Caco-2 (cell line): ENCODE measurements at regions of chr17 and their contacts with region 1.

Region 1: DNA sequence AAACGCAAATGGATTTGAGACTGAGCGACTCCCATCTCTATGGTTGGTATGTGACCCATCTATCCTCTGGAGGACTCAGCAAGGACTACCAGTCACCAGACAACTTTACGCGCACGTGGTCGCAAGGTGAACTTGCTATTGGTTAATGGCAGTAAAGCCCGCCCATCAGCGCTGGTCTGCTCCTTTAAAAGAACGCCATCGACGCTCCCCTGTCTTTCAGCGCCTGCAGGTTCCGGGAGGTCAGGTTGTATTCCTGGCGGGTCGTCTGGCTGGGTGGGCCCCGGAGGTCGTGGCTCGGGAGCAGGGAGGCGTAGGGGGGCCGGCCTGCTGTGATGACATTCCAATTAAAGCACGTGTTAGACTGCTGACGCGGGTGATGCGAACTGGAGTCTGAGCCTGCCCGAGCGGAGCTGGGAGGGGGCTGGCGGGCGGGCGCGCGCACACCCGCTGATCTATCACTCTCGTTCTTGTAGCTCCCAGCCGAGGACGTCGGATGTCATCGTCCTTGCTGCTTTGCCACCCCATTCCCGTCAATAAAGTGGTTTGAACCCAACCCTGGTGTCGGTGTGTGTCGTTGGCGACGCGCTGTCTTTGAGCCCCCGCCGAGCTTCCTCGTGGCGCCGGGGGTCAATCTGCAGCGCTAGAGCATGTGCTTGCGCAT is 15.9 kb upstream of the ERN1 start:
- DNase-seq: peak; percentile 97 to 99
- H3K4me3 ChIP-seq: peak overlapping the region; percentile 81
- H3K4me3 Mint-ChIP-seq: no peak overlapping the region
- H3K27ac Mint-ChIP-seq: no peak overlapping the region
- H3K4me1 ChIP-seq: no peaks in the 10 kb centered on the region
- H3K4me1 Mint-ChIP-seq: peaks cover 20% of the 10 kb centered on the region
- H3K27me3 ChIP-seq: no peaks in the 10 kb centered on the region
- H3K27me3 Mint-ChIP-seq: no peaks in the 10 kb centered on the region
- CTCF ChIP-seq: no peak

Region 2: DNA sequence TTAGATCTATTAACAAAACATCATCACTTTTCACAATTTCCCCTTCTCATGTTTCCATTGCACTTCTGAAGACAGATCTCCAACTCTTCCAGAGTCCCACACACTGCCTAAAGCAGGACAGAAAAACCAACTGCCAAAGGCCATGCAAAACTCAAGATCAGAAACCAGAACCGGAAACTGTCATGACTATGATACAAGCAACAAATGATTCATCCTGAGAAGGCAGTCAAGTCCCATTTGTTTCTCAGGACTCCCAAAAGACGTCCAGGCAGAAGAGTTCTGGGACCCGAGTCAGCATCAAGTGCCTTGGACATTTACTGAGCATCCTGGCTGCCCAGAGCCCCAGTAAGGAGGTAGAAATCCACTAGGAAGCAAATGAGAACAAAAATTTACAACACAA is 54.8 kb before region 1 on chr17:
- CTCF ChIA-PET with region 1: no interaction called
- POLR2A ChIA-PET with region 1: no interaction called
- intact Hi-C with region 1: no loop called
- DNase-seq: no peak
- H3K4me3 ChIP-seq: no peak overlapping the region
- H3K4me3 Mint-ChIP-seq: no peak overlapping the region
- H3K27ac Mint-ChIP-seq: no peak overlapping the region
- H3K4me1 ChIP-seq: peaks cover 17% of the 10 kb centered on the region
- H3K4me1 Mint-ChIP-seq: peaks cover 20% of the 10 kb centered on the region
- H3K27me3 ChIP-seq: no peaks in the 10 kb centered on the region
- H3K27me3 Mint-ChIP-seq: no peaks in the 10 kb centered on the region
- CTCF ChIP-seq: no peak

Region 3: DNA sequence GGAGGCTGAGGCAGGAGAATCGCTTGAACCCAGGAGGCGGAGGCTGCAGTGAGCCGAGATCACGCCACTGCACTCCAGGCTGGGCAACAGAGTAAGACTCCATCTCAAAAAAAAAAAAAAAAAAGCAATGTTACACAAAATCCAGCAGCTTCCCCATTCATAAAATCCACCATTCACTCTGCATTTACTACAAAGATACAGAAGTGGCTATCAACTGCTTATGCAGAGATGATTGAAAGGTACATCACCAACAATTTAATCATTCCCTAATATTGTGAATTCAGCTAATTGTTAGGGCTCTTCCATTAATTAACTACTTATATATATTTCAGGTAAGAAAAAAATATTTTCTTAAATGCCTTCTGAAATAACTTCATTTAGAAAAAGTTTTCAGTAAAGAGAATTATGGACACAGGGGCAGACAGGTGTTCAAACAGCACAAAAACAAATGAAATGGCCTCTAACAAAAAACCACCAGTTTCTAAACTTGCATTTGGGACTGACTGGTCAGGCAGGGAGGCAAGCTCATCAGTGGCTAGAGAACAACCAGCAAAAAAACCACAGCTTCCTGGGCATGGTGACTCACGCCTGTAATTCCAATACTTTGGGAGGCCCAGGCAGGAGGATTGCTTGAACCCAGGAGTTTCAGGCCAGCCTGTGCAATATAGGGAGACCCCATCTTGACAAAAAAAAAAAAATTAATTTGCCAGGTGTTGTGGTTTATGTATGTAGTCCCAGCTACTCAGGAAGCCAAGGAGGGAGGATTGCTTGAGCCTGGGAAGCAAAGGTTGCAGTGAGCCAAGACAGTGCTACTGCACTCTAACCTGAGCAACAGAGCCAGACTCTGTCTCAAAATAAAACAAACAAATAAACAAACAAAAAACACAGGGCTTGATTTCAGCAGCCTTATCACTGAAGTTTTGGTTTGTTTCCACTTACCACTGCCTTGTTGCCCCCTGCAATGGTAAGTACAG is 42.2 kb before region 1 on chr17:
- CTCF ChIA-PET with region 1: no interaction called
- POLR2A ChIA-PET with region 1: no interaction called
- intact Hi-C with region 1: no loop called
- DNase-seq: no peak
- H3K4me3 ChIP-seq: no peak overlapping the region
- H3K4me3 Mint-ChIP-seq: no peak overlapping the region
- H3K27ac Mint-ChIP-seq: no peak overlapping the region
- H3K4me1 ChIP-seq: no peaks in the 10 kb centered on the region
- H3K4me1 Mint-ChIP-seq: peaks cover 12% of the 10 kb centered on the region
- H3K27me3 ChIP-seq: no peaks in the 10 kb centered on the region
- H3K27me3 Mint-ChIP-seq: no peaks in the 10 kb centered on the region
- CTCF ChIP-seq: no peak

Region 4: GRCh38 chr17:64178011-64178825 is 32.3 kb after region 1 on chr17:
- CTCF ChIA-PET with region 1: no interaction called
- POLR2A ChIA-PET with region 1: interaction called, 10 read pairs
- intact Hi-C with region 1: no loop called
- DNase-seq: peak; percentile 62 to 72
- H3K4me3 ChIP-seq: no peak overlapping the region
- H3K4me3 Mint-ChIP-seq: peak overlapping the region; percentile 54
- H3K27ac Mint-ChIP-seq: peak overlapping the region; percentile 53
- H3K4me1 ChIP-seq: peaks cover 13% of the 10 kb centered on the region
- H3K4me1 Mint-ChIP-seq: peaks cover 15% of the 10 kb centered on the region
- H3K27me3 ChIP-seq: no peaks in the 10 kb centered on the region
- H3K27me3 Mint-ChIP-seq: no peaks in the 10 kb centered on the region
- CTCF ChIP-seq: no peak

Region 5: GRCh38 chr17:64216338-64217248 is 70.7 kb after region 1 on chr17:
- CTCF ChIA-PET with region 1: interaction called, 3 read pairs
- POLR2A ChIA-PET with region 1: interaction called, 10 read pairs
- intact Hi-C with region 1: no loop called
- DNase-seq: peak; percentile 75 to 82
- H3K4me3 ChIP-seq: no peak overlapping the region
- H3K4me3 Mint-ChIP-seq: no peak overlapping the region
- H3K27ac Mint-ChIP-seq: peak overlapping the region; percentile 42
- H3K4me1 ChIP-seq: peaks cover 45% of the 10 kb centered on the region
- H3K4me1 Mint-ChIP-seq: peaks cover 37% of the 10 kb centered on the region
- H3K27me3 ChIP-seq: no peaks in the 10 kb centered on the region
- H3K27me3 Mint-ChIP-seq: no peaks in the 10 kb centered on the region
- CTCF ChIP-seq: peak; percentile 30 to 55

Region 6: GRCh38 chr17:64281962-64282727 is 136.3 kb after region 1 on chr17:
- CTCF ChIA-PET with region 1: interaction called, 11 read pairs
- POLR2A ChIA-PET with region 1: interaction called, 6 read pairs
- intact Hi-C with region 1: loop called (anchors 1 kb)
- DNase-seq: peak; percentile 53 to 67
- H3K4me3 ChIP-seq: no peak overlapping the region
- H3K4me3 Mint-ChIP-seq: no peak overlapping the region
- H3K27ac Mint-ChIP-seq: no peak overlapping the region
- H3K4me1 ChIP-seq: peaks cover 10% of the 10 kb centered on the region; the same call in 1 of the 2 replicates
- H3K4me1 Mint-ChIP-seq: peaks cover 6% of the 10 kb centered on the region
- H3K27me3 ChIP-seq: no peaks in the 10 kb centered on the region
- H3K27me3 Mint-ChIP-seq: no peaks in the 10 kb centered on the region
- CTCF ChIP-seq: peak; percentile 80 to 85

Region 7: GRCh38 chr17:64773836-64774761 is 628.2 kb after region 1 on chr17:
- CTCF ChIA-PET with region 1: no interaction called
- POLR2A ChIA-PET with region 1: interaction called, 10 read pairs
- intact Hi-C with region 1: no loop called
- DNase-seq: peak; percentile 96 to 97
- H3K4me3 ChIP-seq: peak overlapping the region; percentile 47
- H3K4me3 Mint-ChIP-seq: peak overlapping the region; percentile 96
- H3K27ac Mint-ChIP-seq: peak overlapping the region; percentile 97
- H3K4me1 ChIP-seq: no peaks in the 10 kb centered on the region
- H3K4me1 Mint-ChIP-seq: no peaks in the 10 kb centered on the region
- H3K27me3 ChIP-seq: no peaks in the 10 kb centered on the region
- H3K27me3 Mint-ChIP-seq: no peaks in the 10 kb centered on the region
- CTCF ChIP-seq: peak; percentile 55 to 82